ENCODE measurements at regions of chr16 and their contacts with region 1.

Region 1: DNA sequence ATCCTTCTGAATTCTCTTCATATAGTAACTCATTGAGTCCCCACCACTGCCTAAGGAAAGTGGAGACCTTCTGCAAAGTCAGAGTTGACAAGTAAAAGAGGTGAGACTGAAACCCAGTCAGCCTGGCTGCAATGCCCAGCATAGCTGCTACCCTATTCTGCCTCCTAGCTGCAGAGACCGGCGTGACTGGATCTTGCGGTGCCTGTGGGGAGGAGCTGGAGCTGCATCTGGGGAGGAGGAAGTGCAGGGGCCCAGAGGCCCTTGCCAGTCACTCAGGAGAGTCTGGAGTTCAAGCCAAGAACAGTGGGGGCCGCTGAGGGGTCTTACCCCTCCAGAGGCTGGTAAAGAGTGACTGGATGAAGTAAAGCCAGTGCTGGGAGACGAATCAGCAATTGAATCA is 35.0 kb upstream of the ZNF423 start:
- DNase-seq: no peak
- H3K4me3 ChIP-seq: no peak overlapping the region
- H3K27me3 ChIP-seq: no peaks in the 10 kb centered on the region
- CTCF ChIP-seq: no peak

Region 2: DNA sequence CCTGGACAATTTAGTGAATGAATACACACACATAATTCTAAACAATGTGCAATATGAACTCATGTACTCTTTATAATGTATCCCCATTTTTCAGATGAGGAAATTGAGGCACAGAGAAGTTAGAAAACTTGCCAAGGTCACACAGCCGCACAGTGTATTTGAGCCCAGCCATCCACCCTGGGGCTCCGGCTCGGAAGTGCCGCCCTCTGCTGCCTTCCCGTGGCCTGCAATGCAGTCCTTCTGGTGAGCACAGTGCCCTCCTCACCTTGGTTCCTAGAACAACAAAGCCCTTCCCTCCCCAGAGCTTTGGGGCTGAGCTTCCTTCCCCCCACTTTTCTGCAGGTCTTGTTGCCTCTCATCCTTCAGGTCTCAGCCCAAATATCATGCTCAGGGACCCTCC is 453.5 kb before region 1 on chr16:
- CTCF ChIA-PET with region 1: no interaction called
- POLR2A ChIA-PET with region 1: interaction called, 10 read pairs
- DNase-seq: no peak
- H3K4me3 ChIP-seq: no peak overlapping the region
- H3K27me3 ChIP-seq: no peaks in the 10 kb centered on the region
- CTCF ChIP-seq: no peak

Region 3: GRCh38 chr16:49876716-49877129 is 14.2 kb before region 1 on chr16:
- CTCF ChIA-PET with region 1: interaction called, 17 read pairs
- POLR2A ChIA-PET with region 1: no interaction called
- DNase-seq: no peak
- H3K4me3 ChIP-seq: no peak overlapping the region
- H3K27me3 ChIP-seq: peaks cover 13% of the 10 kb centered on the region
- CTCF ChIP-seq: peak; percentile 79

Region 4: DNA sequence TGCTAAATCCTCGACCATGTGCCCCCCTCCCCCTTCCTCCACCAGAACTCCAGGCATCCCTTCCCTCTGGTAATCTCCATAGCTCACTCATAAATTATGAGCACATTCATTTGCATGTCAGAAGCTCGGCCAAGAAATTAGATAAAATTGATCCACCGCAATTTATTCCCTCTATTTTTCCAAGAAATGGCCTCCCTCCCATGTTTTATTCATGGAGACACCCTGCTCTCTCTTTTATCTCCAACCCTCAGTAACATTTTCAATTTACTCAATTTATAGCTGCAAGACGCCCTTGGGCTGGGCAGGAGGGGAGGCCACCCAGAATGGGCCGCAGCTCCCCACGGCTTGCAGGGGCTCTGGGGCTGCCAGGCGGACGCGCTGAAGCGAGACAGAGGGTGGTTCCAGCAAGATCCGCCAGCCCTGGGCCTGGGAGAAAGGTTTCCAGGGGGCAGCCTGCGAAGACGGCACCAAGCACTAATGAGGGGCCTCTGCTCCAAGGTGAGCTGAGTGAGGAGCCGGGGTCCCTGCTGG is 19.7 kb after region 1 on chr16:
- CTCF ChIA-PET with region 1: no interaction called
- POLR2A ChIA-PET with region 1: no interaction called
- DNase-seq: no peak
- H3K4me3 ChIP-seq: no peak overlapping the region
- H3K27me3 ChIP-seq: no peaks in the 10 kb centered on the region; the same call in 1 of the 2 replicates
- CTCF ChIP-seq: no peak

Measured in BJ (cell line).